ENCODE measurements at regions of chr17 and their contacts with region 1.

Region 1: DNA sequence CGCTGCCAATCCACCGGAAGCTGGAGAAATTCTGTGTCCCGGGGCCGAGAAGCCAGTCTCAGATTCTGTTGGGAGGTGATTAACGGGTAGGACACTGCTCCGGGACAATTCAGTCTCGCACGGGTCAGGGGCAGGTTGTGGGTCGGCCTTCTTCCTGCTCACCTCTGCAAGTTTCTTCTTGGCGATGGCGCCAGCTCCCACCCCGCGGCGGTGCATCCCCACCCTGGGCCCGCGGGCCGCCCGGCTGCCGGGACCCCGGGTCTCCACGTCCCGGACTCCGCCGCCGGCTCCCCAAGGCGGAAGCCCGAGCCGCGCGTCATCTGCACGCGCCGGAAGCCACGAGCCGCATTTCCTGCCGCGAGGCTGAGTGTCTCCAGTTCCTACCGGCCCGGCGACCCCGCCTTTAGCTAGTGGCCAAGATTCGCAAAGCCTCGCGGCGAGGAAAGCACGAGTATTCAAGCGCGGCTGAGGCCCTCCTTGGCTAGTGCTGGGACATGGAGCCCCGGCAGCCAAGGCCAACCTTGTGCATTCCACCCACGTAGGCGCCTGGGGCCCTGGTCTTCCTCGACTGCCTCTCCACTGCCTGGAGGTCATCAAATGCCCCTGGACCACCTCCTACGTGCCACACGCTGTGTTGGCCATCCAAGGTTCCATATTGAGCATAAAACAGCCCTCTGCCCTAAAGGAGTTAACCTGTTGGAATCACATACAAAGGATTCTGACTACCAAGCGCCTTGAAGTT is at the start of gene SNF8:
- DNase-seq: peak; percentile 83 to 94 (median 91)
- ATAC-seq: peak; percentile 94 to 95
- H3K4me3 Mint-ChIP-seq: peak within 1 kb of the TSS; percentile 92 to 99 (median 96)
- H3K27ac Mint-ChIP-seq: peak within 1 kb of the TSS; percentile 93 to 98 (median 96)
- H3K4me1 Mint-ChIP-seq: peaks cover 0 to 30% (median 21%) of the 10 kb centered on the region in 4 donors
- H3K27me3 Mint-ChIP-seq: peaks cover 0 to 3% (median 0%) of the 10 kb centered on the region in 5 donors
- polyA plus RNA-seq, gene SNF8: 104 to 110 (median 105) TPM

Region 2: GRCh38 chr17:48908047-48908843 is 36.4 kb before region 1 on chr17 and contains the start of gene UBE2Z:
- POLR2A ChIA-PET with region 1: interaction called, 21 read pairs
- DNase-seq: peak; percentile 71 to 93 (median 83)
- ATAC-seq: peak; percentile 85 to 89
- H3K4me3 Mint-ChIP-seq: peak within 1 kb of the TSS; percentile 82 to 98 (median 94)
- H3K27ac Mint-ChIP-seq: peak within 1 kb of the TSS; percentile 97 to 99 (median 98)
- H3K4me1 Mint-ChIP-seq: peaks cover 29 to 52% (median 48%) of the 10 kb centered on the region in 4 donors
- H3K27me3 Mint-ChIP-seq: no peaks in the 10 kb centered on the region
- polyA plus RNA-seq, gene UBE2Z: 58.4 to 76.0 (median 65.2) TPM

Measured in naive thymus-derived CD8-positive, alpha-beta T cell (primary cell).